ENCODE measurements at regions of chr5 and their contacts with region 1.

Region 1: GRCh38 chr5:170100066-170100943 is 5.4 kb upstream of the FOXI1 start:
- DNase-seq: peak; percentile 74
- ATAC-seq: peak; percentile 81
- H3K4me3 ChIP-seq: no peak overlapping the region
- H3K27ac ChIP-seq: no peak overlapping the region
- H3K4me1 ChIP-seq: peaks cover 7% of the 10 kb centered on the region; the same call in 1 of the 2 replicates
- H3K27me3 ChIP-seq: no peaks in the 10 kb centered on the region
- CTCF ChIP-seq: peak; percentile 75

Region 2: DNA sequence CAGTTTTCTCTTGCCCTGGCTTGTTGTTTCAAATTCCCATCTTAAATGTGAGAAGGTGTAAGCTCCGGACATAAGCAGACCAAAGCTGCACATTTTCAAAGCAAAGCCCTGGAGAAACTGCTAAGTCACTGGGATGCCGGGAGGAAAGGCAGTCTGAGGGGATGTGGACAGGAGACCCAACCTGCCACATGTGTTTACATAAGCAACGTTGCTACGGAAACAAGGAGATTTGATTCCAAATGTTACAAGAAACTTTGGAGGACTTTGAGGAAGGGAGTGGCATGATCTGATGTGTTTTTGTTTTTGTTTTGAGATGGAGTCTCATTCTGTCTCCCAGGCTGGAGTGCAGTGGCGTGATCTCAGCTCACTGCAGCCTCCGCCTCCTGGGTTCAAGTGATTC is 94.3 kb before region 1 on chr5:
- CTCF ChIA-PET with region 1: no interaction called
- POLR2A ChIA-PET with region 1: no interaction called
- intact Hi-C with region 1: no loop called
- DNase-seq: no peak
- ATAC-seq: no peak
- H3K4me3 ChIP-seq: no peak overlapping the region
- H3K27ac ChIP-seq: no peak overlapping the region
- H3K4me1 ChIP-seq: no peaks in the 10 kb centered on the region
- H3K27me3 ChIP-seq: no peaks in the 10 kb centered on the region
- CTCF ChIP-seq: no peak

Region 3: GRCh38 chr5:170070556-170071412 is 29.5 kb before region 1 on chr5:
- CTCF ChIA-PET with region 1: no interaction called
- POLR2A ChIA-PET with region 1: no interaction called
- intact Hi-C with region 1: no loop called
- DNase-seq: peak; percentile 30
- ATAC-seq: peak; percentile 75
- H3K4me3 ChIP-seq: no peak overlapping the region
- H3K27ac ChIP-seq: no peak overlapping the region
- H3K4me1 ChIP-seq: no peaks in the 10 kb centered on the region
- H3K27me3 ChIP-seq: no peaks in the 10 kb centered on the region
- CTCF ChIP-seq: peak; percentile 78

Region 4: DNA sequence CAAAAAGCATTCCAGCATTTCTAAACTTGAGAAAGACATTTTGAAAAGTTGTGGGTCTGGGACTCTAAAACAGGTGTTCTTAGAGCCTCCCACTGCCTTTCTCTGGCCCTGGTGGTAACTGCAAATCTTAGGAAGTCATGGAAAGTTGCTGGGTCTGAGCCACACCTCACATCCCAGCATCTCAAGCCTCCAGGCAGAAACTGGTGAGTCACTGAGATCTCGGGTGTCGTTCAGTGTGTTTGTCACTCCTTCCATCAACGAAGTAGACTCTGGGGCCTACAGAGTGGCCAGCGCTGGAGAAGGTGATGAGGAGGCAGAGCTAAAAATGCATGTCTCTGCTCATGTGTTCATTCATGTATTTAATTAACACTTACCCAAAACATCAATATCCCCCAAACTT is 72.9 kb after region 1 on chr5:
- CTCF ChIA-PET with region 1: no interaction called
- POLR2A ChIA-PET with region 1: no interaction called
- intact Hi-C with region 1: no loop called
- DNase-seq: peak; percentile 86
- ATAC-seq: peak; percentile 96
- H3K4me3 ChIP-seq: no peak overlapping the region
- H3K27ac ChIP-seq: peak overlapping the region; percentile 28
- H3K4me1 ChIP-seq: peaks cover 24% of the 10 kb centered on the region
- H3K27me3 ChIP-seq: no peaks in the 10 kb centered on the region
- CTCF ChIP-seq: no peak

Region 5: GRCh38 chr5:170183816-170184687 is 83.7 kb after region 1 on chr5:
- CTCF ChIA-PET with region 1: no interaction called
- POLR2A ChIA-PET with region 1: no interaction called
- intact Hi-C with region 1: loop called (anchors 1 kb)
- DNase-seq: peak; percentile 74
- ATAC-seq: peak; percentile 96
- H3K4me3 ChIP-seq: no peak overlapping the region
- H3K27ac ChIP-seq: no peak overlapping the region
- H3K4me1 ChIP-seq: no peaks in the 10 kb centered on the region
- H3K27me3 ChIP-seq: no peaks in the 10 kb centered on the region
- CTCF ChIP-seq: peak; percentile 82